Gastrocnemius medialis (tissue), 4 donors: ENCODE measurements at regions of chr10 and their contacts with region 1.

Region 1: DNA sequence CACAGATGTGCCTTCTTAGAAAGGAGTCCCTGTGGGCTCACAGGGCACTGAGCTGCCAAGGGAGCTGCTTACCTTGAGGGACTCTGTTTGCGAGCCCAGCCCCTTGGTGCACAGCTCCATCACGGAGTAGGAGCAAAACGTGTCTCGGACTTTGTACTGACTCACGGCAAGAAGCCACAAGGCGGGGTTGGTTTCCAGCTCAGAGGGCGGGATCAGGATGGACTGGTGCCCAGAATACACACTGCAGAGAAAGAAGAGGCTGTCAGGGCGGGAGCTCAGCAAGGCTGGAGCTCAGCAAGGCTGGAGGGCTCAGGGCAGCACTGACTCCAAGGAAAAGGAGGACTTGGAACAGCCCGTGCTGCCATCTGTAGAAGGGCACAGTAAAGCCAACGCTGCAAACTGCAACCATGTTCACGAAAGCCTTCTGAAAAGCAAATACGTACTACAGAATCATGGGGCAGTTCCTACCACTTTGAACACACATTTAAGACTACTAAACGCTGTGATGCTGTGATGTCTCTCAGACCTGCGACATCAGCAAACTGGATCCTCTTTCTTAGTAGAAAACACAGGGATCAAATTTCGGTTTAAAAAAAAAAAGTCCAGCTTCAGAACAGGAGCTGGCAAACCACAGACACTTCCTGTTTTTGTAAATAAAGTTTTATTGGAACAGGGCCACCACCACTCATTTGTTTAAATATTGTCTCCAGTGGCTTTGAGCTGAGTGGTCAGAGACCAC is 194.3 kb downstream of the ZMYND11 start:
- DNase-seq: peak; percentile 45 to 71
- ATAC-seq: peak; percentile 77 to 84
- H3K4me3 ChIP-seq: no peak overlapping the region
- H3K27ac ChIP-seq: peak overlapping the region in 3 of 4 donors; percentile 5 to 32 (median 21)
- H3K4me1 ChIP-seq: no peaks in the 10 kb centered on the region
- H3K27me3 ChIP-seq: no peaks in the 10 kb centered on the region
- CTCF ChIP-seq: no peak
- POLR2A ChIP-seq: no peak

Region 2: GRCh38 chr10:306675-307185 is 22.8 kb before region 1 on chr10:
- in situ Hi-C with region 1: no loop called
- intact Hi-C with region 1: loop called (anchors 1 kb)
- DNase-seq: no peak
- ATAC-seq: peak in 1 of 2 donors; percentile 21
- H3K4me3 ChIP-seq: no peak overlapping the region
- H3K27ac ChIP-seq: no peak overlapping the region
- H3K4me1 ChIP-seq: no peaks in the 10 kb centered on the region
- H3K27me3 ChIP-seq: no peaks in the 10 kb centered on the region
- CTCF ChIP-seq: no peak
- POLR2A ChIP-seq: no peak

Region 3: DNA sequence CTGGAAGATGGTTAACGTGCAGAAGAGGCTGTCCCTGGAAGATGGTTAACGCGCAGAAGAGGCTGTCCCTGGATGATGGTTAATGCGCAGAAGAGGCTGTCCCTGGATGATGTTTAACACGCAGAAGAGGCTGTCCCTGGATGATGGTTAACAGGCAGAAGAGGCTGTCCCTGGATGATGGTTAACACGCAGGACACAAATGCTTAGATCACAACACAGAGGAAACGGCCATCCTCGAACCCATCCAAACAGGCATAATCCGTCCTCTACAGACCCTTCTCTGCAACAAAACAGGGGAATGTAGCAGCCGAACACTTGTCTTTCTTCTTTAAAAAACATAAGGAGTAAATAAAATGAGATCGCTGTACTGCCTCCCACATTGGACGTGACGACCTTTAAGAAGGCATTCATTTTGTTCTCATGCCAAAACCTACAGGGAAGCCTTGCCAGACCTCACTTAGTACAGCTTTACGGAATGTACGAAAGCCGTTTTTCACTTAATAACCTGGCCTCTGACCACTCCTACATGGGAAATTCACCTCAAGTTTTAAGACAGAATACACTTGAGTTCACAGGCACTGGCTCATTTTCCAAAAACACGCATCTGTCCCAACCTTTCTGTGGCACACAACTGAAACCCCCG is 50.9 kb after region 1 on chr10:
- in situ Hi-C with region 1: no loop called
- intact Hi-C with region 1: no loop called
- DNase-seq: no peak
- ATAC-seq: no peak
- H3K4me3 ChIP-seq: no peak overlapping the region
- H3K27ac ChIP-seq: no peak overlapping the region
- H3K4me1 ChIP-seq: no peaks in the 10 kb centered on the region
- H3K27me3 ChIP-seq: no peaks in the 10 kb centered on the region
- CTCF ChIP-seq: no peak
- POLR2A ChIP-seq: no peak

Region 4: DNA sequence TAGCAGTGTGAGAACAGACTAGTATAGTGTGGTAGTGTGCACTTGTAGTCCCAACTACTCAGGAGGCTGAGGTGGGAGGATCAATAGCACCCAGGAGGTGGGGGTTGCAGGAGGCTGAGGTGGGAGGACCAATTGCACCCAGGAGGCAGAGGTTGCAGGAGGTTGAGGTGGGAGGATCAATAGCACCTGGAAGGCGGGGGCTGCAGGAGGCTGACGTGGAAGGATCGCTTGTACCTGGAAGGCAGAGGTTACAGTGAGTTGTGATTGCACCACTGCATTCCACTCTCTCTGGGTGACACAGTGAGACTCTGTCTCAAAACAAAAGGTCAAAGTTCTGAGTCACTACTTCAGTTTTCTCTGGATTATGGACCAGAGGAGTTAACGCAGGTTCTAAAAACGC is 382.6 kb after region 1 on chr10:
- in situ Hi-C with region 1: no loop called
- intact Hi-C with region 1: no loop called
- DNase-seq: no peak
- ATAC-seq: no peak
- H3K4me3 ChIP-seq: no peak overlapping the region
- H3K27ac ChIP-seq: no peak overlapping the region
- H3K4me1 ChIP-seq: no peaks in the 10 kb centered on the region
- H3K27me3 ChIP-seq: no peaks in the 10 kb centered on the region
- CTCF ChIP-seq: no peak
- POLR2A ChIP-seq: no peak

Region 5: GRCh38 chr10:938990-939678 is 609.6 kb after region 1 on chr10:
- in situ Hi-C with region 1: no loop called
- intact Hi-C with region 1: no loop called
- DNase-seq: no peak
- ATAC-seq: no peak
- H3K4me3 ChIP-seq: no peak overlapping the region
- H3K27ac ChIP-seq: no peak overlapping the region
- H3K4me1 ChIP-seq: no peaks in the 10 kb centered on the region
- H3K27me3 ChIP-seq: no peaks in the 10 kb centered on the region
- CTCF ChIP-seq: no peak
- POLR2A ChIP-seq: no peak